CD4-positive, alpha-beta T cell (primary cell): ENCODE measurements at regions of chr5 and their contacts with region 1.

Region 1: DNA sequence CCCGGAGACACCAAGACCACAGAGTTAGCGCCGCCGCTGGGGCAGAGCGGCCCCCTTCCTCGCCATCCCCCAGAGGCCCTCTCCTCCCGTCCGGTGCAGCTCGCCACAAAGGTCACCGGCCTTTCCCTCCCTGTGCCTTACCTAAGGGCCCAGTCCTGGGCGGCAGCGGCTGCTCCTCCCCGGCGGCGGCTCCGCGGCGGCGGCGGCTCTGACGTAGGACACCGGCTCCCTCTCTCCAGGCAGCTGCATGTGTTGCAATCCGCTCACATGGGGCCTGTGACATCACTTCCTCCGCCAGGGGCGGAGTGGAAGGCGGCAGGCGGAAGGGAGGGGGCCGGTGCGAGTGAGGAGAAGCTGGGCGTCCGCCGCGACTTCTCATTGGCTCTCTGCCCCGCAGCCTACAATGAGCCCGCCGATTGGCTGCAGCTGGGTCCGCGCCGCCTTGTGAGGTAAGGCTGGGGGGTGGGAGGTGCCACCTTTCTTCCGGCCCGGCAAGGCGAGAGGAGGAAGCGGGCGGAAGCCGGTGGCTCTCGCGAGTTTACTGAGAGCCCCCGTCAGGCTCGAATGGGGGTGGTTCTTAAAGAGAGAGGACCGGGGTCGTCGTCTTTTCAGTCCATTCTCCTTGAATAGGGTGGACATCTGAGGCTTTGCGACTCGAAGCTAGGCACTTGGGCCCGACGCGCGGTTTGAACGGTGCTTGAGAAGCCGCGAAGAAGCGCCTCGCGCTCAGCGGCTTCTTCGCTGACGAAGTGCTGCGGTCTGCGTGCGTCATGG is at the start of gene ETF1:
- DNase-seq: peak; percentile 98 to 100 (median 99)
- ATAC-seq: peak; percentile 87
- H3K4me3 ChIP-seq: peak within 1 kb of the TSS; percentile 95
- H3K4me3 Mint-ChIP-seq: peak within 1 kb of the TSS; percentile 99
- H3K27ac ChIP-seq: peak within 1 kb of the TSS; percentile 99 to 100
- H3K27ac Mint-ChIP-seq: peak within 1 kb of the TSS; percentile 99
- H3K4me1 ChIP-seq: peaks cover 57% of the 10 kb centered on the region
- H3K4me1 Mint-ChIP-seq: peaks cover 88% of the 10 kb centered on the region
- H3K27me3 ChIP-seq: no peaks in the 10 kb centered on the region
- H3K27me3 Mint-ChIP-seq: no peaks in the 10 kb centered on the region
- CTCF ChIP-seq: no peak
- total RNA-seq, gene ETF1: 178 to 187 TPM

Region 2: DNA sequence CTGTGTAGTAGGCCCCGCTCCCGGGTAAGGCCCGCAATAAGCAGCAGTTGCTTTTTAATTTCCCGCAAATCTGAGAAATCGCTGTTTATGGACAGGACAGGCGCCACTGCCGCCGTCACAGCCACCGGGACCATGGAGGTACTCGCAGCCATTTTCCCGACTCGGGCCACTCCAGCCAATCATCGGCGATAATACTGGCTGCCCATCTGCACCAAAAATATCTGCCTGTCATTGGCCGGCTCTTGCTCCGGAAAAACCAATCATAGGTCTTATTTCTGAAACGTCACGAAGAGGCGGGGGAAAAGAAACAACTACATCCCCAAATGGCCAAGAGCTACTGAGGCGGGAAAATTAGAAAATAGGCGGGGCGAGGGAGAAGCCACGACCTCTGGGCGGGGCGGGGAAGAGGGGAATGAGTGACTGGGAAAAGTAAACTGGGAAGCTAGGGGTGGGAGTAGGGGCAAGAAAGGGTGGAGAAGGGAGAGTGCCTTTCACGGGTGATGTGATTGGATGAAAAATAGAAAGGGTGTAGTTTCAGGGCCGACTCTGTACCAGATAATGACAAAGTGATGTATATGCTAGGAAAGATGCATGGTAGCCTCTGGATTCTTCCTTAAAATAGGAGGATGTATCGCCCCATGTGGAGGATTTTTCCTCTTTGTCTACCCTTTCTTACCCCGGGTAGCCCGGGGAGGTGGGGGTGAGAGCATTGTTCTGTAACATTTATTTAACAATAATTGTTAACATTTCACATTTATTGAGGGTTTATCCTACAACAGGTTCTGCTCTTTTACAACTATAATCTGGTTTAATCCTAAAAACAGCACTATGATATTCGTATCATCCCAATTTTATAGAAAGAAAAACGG is 329.7 kb before region 1 on chr5 and contains the start of gene CDC23:
- CTCF ChIA-PET with region 1: no interaction called
- POLR2A ChIA-PET with region 1: interaction called, 3 read pairs
- intact Hi-C with region 1: loop called in 1 of 2 experiments (anchors 10 kb)
- DNase-seq: peak; percentile 78 to 98 (median 83)
- ATAC-seq: peak; percentile 98
- H3K4me3 ChIP-seq: peak within 1 kb of the TSS; percentile 90
- H3K4me3 Mint-ChIP-seq: peak within 1 kb of the TSS; percentile 95
- H3K27ac ChIP-seq: peak within 1 kb of the TSS; percentile 70 to 71
- H3K27ac Mint-ChIP-seq: peak within 1 kb of the TSS; percentile 91
- H3K4me1 ChIP-seq: peaks cover 23% of the 10 kb centered on the region
- H3K4me1 Mint-ChIP-seq: peaks cover 26% of the 10 kb centered on the region
- H3K27me3 ChIP-seq: peaks cover 0 to 2% of the 10 kb centered on the region in 2 experiments
- H3K27me3 Mint-ChIP-seq: peaks cover 4% of the 10 kb centered on the region
- CTCF ChIP-seq: no peak
- total RNA-seq, gene CDC23: 14.2 to 15.6 TPM

Region 3: GRCh38 chr5:138337685-138338410 is 205.3 kb before region 1 on chr5 and contains the start of gene FAM53C:
- CTCF ChIA-PET with region 1: no interaction called
- POLR2A ChIA-PET with region 1: interaction called, 20 read pairs
- intact Hi-C with region 1: loop called in 1 of 2 experiments (anchors 2 kb)
- DNase-seq: peak; percentile 82 to 96 (median 92)
- ATAC-seq: peak; percentile 81
- H3K4me3 ChIP-seq: peak within 1 kb of the TSS; percentile 62
- H3K4me3 Mint-ChIP-seq: peak within 1 kb of the TSS; percentile 94
- H3K27ac ChIP-seq: peak within 1 kb of the TSS; percentile 93 to 95
- H3K27ac Mint-ChIP-seq: peak within 1 kb of the TSS; percentile 96
- H3K4me1 ChIP-seq: peaks cover 21% of the 10 kb centered on the region
- H3K4me1 Mint-ChIP-seq: peaks cover 46% of the 10 kb centered on the region
- H3K27me3 ChIP-seq: no peaks in the 10 kb centered on the region
- H3K27me3 Mint-ChIP-seq: no peaks in the 10 kb centered on the region
- CTCF ChIP-seq: no peak
- total RNA-seq, gene FAM53C: 81.0 to 83.8 TPM

Region 4: DNA sequence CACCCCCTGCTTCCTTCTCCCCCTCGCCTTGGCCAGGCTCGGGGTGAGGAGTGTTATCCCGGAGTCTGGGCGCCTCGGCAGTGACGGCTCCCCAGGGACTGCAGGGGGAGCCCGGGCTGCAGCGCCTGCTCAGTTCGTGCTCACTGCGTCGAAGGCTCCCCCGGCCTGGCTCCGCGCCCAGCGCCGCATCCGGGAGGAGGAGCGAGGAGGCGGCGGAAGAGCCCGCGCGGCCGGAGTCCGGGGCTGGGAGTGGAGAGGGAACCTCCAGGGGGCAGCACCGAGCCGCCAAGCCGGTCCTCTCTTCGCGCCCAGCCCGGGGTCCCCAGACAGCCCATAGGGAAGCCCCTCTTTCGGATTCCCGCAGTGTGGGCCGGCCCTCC is 79.1 kb before region 1 on chr5:
- CTCF ChIA-PET with region 1: interaction called, 16 read pairs
- POLR2A ChIA-PET with region 1: interaction called, 59 read pairs
- intact Hi-C with region 1: loop called (anchors 1 to 2 kb)
- DNase-seq: peak; percentile 85 to 98 (median 93)
- ATAC-seq: peak; percentile 51
- H3K4me3 ChIP-seq: peak overlapping the region; percentile 60
- H3K4me3 Mint-ChIP-seq: peak overlapping the region; percentile 96
- H3K27ac ChIP-seq: peak overlapping the region; percentile 89 to 94
- H3K27ac Mint-ChIP-seq: peak overlapping the region; percentile 93
- H3K4me1 ChIP-seq: peaks cover 60% of the 10 kb centered on the region
- H3K4me1 Mint-ChIP-seq: peaks cover 50% of the 10 kb centered on the region
- H3K27me3 ChIP-seq: no peaks in the 10 kb centered on the region
- H3K27me3 Mint-ChIP-seq: no peaks in the 10 kb centered on the region
- CTCF ChIP-seq: peak; percentile 85

Region 5: DNA sequence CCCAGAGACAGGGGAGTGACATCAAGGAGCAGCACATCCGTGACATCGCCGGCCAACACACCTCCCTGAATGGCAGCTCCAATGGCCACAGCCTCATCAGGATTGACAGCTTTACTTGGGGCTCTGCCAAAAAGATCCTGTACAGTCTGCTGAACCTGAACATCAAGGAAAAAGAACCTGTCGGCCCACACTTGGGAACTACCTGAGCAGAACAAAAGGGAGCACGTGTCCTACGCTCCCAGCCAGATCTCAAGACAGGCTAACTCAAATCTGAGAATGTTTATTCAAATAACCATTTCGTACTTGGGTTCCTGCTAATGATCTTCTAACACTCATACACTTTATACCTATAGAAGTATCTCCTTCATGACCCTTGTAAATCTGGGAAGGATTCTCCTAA is 16.8 kb after region 1 on chr5:
- CTCF ChIA-PET with region 1: interaction called, 6 read pairs
- POLR2A ChIA-PET with region 1: interaction called, 19 read pairs
- intact Hi-C with region 1: no loop called
- DNase-seq: no peak
- ATAC-seq: no peak
- H3K4me3 ChIP-seq: no peak overlapping the region
- H3K4me3 Mint-ChIP-seq: no peak overlapping the region
- H3K27ac ChIP-seq: no peak overlapping the region
- H3K27ac Mint-ChIP-seq: peak overlapping the region; percentile 9
- H3K4me1 ChIP-seq: peaks cover 10% of the 10 kb centered on the region
- H3K4me1 Mint-ChIP-seq: peaks cover 28% of the 10 kb centered on the region
- H3K27me3 ChIP-seq: no peaks in the 10 kb centered on the region
- H3K27me3 Mint-ChIP-seq: no peaks in the 10 kb centered on the region
- CTCF ChIP-seq: no peak

Region 6: GRCh38 chr5:139197710-139198669 is 654.8 kb after region 1 on chr5 and contains the start of gene SIL1:
- CTCF ChIA-PET with region 1: no interaction called
- POLR2A ChIA-PET with region 1: no interaction called
- intact Hi-C with region 1: loop called in 1 of 2 experiments (anchors 10 kb)
- DNase-seq: peak; percentile 86 to 99 (median 96)
- ATAC-seq: peak; percentile 99
- H3K4me3 ChIP-seq: peak within 1 kb of the TSS; percentile 83
- H3K4me3 Mint-ChIP-seq: peak within 1 kb of the TSS; percentile 85
- H3K27ac ChIP-seq: peak within 1 kb of the TSS; percentile 82 to 86
- H3K27ac Mint-ChIP-seq: peak within 1 kb of the TSS; percentile 77
- H3K4me1 ChIP-seq: peaks cover 17% of the 10 kb centered on the region
- H3K4me1 Mint-ChIP-seq: peaks cover 21% of the 10 kb centered on the region
- H3K27me3 ChIP-seq: no peaks in the 10 kb centered on the region
- H3K27me3 Mint-ChIP-seq: no peaks in the 10 kb centered on the region
- CTCF ChIP-seq: no peak
- total RNA-seq, gene SIL1: 5.6 to 9.2 TPM

Region 7: DNA sequence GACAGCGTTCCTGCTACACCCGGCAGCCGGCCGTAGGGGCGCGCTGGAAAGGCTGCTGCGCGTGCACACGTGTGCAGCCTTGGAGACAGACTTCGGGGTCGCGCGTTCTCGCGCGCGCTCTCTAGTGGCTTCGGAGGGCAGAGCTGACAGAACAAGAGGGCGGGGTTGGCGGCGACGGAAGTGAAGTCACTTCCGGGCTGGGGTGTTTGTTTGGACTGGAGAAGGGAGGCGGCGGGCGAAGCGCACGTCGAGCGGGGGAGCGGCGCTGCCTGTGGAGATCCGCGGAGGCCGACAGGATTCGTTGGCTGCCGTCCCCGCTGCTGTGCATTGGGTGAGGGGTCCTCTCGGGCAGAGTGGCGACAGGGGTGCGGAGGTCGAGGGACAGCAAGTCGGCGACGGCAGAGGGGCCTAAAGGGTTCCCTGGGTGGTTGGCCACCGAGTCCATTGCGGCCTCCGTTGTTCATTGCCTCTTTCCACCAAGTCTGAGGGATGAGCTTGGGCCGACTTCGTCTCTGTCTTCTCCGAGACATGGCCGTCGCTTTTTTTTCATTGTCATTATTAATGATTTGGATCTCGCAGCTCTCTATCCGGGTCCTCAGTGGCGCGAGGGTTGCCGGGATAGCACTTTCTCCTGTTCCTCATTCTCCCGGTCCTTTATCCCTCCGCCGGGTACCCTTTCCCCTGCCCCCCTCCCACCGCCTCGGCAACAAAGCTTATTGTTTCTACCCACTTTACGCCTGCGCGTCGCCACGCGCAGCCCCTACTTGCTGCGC is 798.7 kb after region 1 on chr5 and contains the start of gene PAIP2:
- CTCF ChIA-PET with region 1: no interaction called
- POLR2A ChIA-PET with region 1: interaction called, 16 read pairs
- intact Hi-C with region 1: no loop called
- DNase-seq: peak; percentile 95 to 99 (median 97)
- ATAC-seq: peak; percentile 82
- H3K4me3 ChIP-seq: peak within 1 kb of the TSS; percentile 94
- H3K4me3 Mint-ChIP-seq: peak within 1 kb of the TSS; percentile 96
- H3K27ac ChIP-seq: peak within 1 kb of the TSS; percentile 100
- H3K27ac Mint-ChIP-seq: peak within 1 kb of the TSS; percentile 95
- H3K4me1 ChIP-seq: peaks cover 34% of the 10 kb centered on the region
- H3K4me1 Mint-ChIP-seq: peaks cover 65% of the 10 kb centered on the region
- H3K27me3 ChIP-seq: no peaks in the 10 kb centered on the region
- H3K27me3 Mint-ChIP-seq: no peaks in the 10 kb centered on the region
- CTCF ChIP-seq: peak; percentile 70
- total RNA-seq, gene PAIP2: 151 to 156 TPM